Caco-2 (cell line): ENCODE measurements at regions of chr12 and their contacts with region 1.

Region 1: DNA sequence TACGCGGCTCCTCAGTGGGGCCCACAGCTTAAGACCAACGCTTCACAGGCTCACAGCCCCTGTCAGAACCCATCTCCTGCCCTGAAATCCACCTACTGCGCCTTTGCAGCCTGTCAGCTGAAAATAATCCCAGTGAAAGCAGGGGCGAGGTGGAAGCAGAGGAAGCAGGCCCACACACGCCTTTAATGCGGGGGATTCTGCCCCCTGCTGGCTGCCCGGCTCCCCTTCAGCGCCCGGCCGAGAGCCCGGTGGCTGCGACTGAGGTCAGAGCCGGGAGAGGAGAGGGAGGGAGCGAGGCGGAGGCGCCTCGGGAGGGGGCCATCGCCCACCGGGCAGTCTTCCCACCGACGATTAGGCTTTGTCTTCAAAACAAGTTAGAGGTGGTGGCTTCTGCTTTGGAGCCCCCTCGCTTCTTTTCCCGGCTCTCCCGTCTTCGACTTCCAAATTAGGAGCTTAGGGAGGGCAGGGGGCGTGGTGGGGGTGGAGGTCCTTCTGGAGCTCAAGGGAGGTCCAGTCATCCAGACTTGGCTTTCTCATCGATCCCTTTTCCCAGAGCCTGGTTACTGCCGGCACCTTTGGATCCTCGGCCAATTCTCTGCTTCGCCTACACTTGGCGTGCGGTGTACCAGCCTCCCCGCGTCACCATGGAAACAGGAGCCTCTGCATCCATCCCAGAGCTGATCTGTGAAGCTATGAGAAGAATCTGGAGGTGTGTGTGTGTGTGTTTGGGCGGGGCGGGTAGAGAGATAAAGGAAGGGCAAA is 25.2 kb upstream of the RND1 start:
- DNase-seq: peak; percentile 97 to 99
- H3K4me3 ChIP-seq: peak overlapping the region; percentile 50
- H3K4me3 Mint-ChIP-seq: peak overlapping the region; percentile 63
- H3K27ac Mint-ChIP-seq: peak overlapping the region; percentile 66
- H3K4me1 ChIP-seq: peaks cover 33% of the 10 kb centered on the region
- H3K4me1 Mint-ChIP-seq: peaks cover 36% of the 10 kb centered on the region
- H3K27me3 ChIP-seq: no peaks in the 10 kb centered on the region
- H3K27me3 Mint-ChIP-seq: no peaks in the 10 kb centered on the region
- CTCF ChIP-seq: peak; percentile 98 to 99

Region 2: GRCh38 chr12:48768147-48768546 is 122.7 kb before region 1 on chr12:
- CTCF ChIA-PET with region 1: no interaction called
- POLR2A ChIA-PET with region 1: no interaction called
- intact Hi-C with region 1: no loop called
- DNase-seq: no peak
- H3K4me3 ChIP-seq: no peak overlapping the region
- H3K4me3 Mint-ChIP-seq: no peak overlapping the region
- H3K27ac Mint-ChIP-seq: no peak overlapping the region
- H3K4me1 ChIP-seq: 0 out of 2 replicates have a peak, but pooled peaks cover 3% of the 10 kb centered on the region
- H3K4me1 Mint-ChIP-seq: no peaks in the 10 kb centered on the region
- H3K27me3 ChIP-seq: no peaks in the 10 kb centered on the region
- H3K27me3 Mint-ChIP-seq: no peaks in the 10 kb centered on the region
- CTCF ChIP-seq: no peak

Region 3: DNA sequence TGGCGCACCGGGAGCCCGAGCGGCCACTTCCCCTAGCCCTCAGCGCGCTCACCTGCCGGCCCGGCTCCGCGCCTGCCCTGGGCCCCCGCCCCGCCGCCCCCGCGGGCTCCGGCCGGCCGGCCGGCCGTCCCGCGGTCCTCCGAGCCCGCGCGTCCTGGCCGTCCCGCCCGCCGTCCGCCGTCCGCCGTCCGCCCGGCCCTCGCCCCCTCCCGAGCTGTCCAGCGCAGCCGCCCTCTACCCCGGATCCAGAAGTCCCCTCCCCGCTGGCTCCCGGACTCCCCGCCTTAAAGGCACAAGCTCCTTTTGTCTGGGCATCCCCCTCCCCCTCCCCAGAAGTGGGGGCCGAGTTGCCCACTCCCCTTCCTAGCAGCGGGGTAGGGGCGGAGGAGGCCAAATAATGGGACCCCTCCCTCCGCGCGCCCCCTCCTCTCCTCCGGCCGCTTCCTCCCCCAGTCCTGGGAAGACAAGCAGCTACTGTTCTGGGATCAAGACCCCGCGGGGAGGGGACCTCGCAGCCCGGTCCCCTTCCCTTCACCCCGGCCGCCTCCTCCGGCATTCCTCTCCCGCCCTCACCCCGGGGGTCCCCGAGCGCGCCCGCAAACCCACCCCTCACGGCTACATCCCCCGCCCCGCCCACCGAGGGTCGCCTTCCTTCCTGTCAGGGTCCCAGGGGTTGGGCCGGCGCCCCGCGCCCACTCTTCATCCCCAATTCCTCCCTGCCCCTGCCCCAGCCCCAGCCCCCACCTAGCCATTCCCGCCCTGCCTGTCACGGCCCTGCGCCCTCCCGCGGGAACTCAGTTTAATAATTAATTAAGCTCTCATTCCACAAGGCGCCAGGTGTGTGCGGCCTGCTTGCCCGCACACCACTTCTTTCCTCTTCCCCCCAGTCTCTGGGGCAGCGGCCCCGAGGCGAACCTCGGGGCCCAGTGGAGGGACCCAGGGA is 101.7 kb before region 1 on chr12 and contains the start of gene ADCY6:
- CTCF ChIA-PET with region 1: no interaction called
- POLR2A ChIA-PET with region 1: no interaction called
- intact Hi-C with region 1: no loop called
- DNase-seq: peak; percentile 94
- H3K4me3 ChIP-seq: peak within 1 kb of the TSS; percentile 88
- H3K4me3 Mint-ChIP-seq: peak within 1 kb of the TSS; percentile 84
- H3K27ac Mint-ChIP-seq: peak within 1 kb of the TSS; percentile 91
- H3K4me1 ChIP-seq: peaks cover 29% of the 10 kb centered on the region
- H3K4me1 Mint-ChIP-seq: peaks cover 13% of the 10 kb centered on the region
- H3K27me3 ChIP-seq: no peaks in the 10 kb centered on the region
- H3K27me3 Mint-ChIP-seq: no peaks in the 10 kb centered on the region
- CTCF ChIP-seq: no peak
- total RNA-seq, gene ADCY6: 89.8 and 92.9 TPM in 2 replicates

Region 4: GRCh38 chr12:48865434-48866290 is 25.2 kb before region 1 on chr12 and contains the start of gene RND1:
- CTCF ChIA-PET with region 1: interaction called, 25 read pairs
- POLR2A ChIA-PET with region 1: interaction called, 23 read pairs
- intact Hi-C with region 1: loop called (anchors 1 kb)
- DNase-seq: peak; percentile 92 to 93
- H3K4me3 ChIP-seq: peak within 1 kb of the TSS; percentile 73
- H3K4me3 Mint-ChIP-seq: peak within 1 kb of the TSS; percentile 89
- H3K27ac Mint-ChIP-seq: peak within 1 kb of the TSS; percentile 80
- H3K4me1 ChIP-seq: peaks cover 22% of the 10 kb centered on the region
- H3K4me1 Mint-ChIP-seq: peaks cover 14% of the 10 kb centered on the region
- H3K27me3 ChIP-seq: no peaks in the 10 kb centered on the region
- H3K27me3 Mint-ChIP-seq: no peaks in the 10 kb centered on the region
- CTCF ChIP-seq: peak in 1 of 2 experiments; percentile 13
- total RNA-seq, gene RND1: 5.1 and 5.2 TPM in 2 replicates

Region 5: DNA sequence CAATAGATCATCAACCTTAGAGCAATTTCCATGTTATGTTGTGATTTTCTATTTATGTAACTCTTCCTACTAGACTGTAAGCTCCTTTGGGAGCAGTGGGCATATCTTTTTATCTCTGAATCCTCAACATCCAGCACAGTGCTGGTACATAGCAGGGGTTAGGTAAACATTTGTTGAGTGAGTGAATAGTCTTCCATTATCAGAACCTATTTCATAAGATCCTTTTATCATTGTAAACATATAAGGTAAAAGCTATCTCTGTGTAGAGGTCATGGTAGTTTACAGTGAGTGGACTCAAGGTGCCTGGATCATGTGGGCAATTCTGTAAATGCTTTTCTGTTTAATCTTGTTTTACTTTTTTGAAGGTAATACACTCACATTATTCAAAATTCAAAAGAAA is 19.4 kb after region 1 on chr12:
- CTCF ChIA-PET with region 1: interaction called, 23 read pairs
- POLR2A ChIA-PET with region 1: interaction called, 5 read pairs
- intact Hi-C with region 1: loop called (anchors 1 kb)
- DNase-seq: peak; percentile 68
- H3K4me3 ChIP-seq: no peak overlapping the region
- H3K4me3 Mint-ChIP-seq: peak overlapping the region; percentile 6
- H3K27ac Mint-ChIP-seq: no peak overlapping the region
- H3K4me1 ChIP-seq: peaks cover 43% of the 10 kb centered on the region
- H3K4me1 Mint-ChIP-seq: peaks cover 23% of the 10 kb centered on the region
- H3K27me3 ChIP-seq: no peaks in the 10 kb centered on the region
- H3K27me3 Mint-ChIP-seq: no peaks in the 10 kb centered on the region
- CTCF ChIP-seq: no peak

Region 6: GRCh38 chr12:48936379-48936979 is 45.6 kb after region 1 on chr12:
- CTCF ChIA-PET with region 1: interaction called, 16 read pairs
- POLR2A ChIA-PET with region 1: no interaction called
- intact Hi-C with region 1: loop called (anchors 1 kb)
- DNase-seq: peak; percentile 75 to 88
- H3K4me3 ChIP-seq: no peak overlapping the region
- H3K4me3 Mint-ChIP-seq: no peak overlapping the region
- H3K27ac Mint-ChIP-seq: no peak overlapping the region
- H3K4me1 ChIP-seq: no peaks in the 10 kb centered on the region
- H3K4me1 Mint-ChIP-seq: no peaks in the 10 kb centered on the region
- H3K27me3 ChIP-seq: no peaks in the 10 kb centered on the region
- H3K27me3 Mint-ChIP-seq: no peaks in the 10 kb centered on the region
- CTCF ChIP-seq: peak; percentile 94 to 98